Activated B cell treated with CpG ODN at 0.5 μM for 24 hours (primary cell): ENCODE measurements at regions of chr15 and their contacts with region 1.

Region 1: DNA sequence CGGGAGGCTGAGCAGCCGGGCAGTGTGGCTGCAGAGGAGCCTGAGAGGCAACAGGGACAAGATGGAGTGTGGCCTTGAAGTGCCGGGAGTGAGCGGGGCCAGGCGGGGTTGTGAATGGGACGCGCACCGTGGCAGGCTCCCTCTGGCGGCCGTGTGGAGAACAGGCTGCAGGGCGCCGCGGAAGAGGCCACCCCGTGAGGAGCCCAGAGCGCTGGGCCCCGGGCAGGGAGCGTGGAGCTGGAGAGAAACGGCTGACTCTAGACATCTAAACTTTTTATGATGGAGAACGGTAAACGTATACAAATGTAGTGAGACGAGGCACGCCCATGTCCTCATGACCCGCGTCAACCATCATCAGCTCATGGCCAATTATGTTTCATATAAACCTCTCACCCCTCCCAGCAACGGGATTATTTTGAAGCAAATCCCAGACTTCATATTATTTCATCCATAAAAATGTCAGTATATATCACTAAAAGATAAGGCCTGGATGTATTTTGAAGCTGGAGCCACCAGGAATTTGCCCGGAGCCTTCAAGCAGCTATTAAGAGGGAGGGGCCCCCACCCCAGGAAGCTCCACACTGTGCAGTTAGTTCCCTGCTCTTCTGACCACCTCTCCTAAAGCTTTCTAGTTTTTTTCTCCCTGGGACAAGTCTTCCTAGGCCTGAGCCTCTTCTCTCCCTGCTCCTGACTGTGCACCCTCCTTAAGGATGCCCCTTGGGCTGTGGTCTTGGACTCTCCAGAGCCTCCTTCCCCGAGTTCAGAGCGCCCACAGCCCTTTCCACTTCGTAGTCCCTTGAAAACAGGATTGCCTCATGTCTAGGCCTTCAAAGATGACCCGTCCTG is 149.4 kb downstream of the SMAD6 start:
- DNase-seq: peak; percentile 70
- ATAC-seq: peak; percentile 99
- H3K4me3 Mint-ChIP-seq: peak overlapping the region; percentile 38
- H3K27ac Mint-ChIP-seq: no peak overlapping the region
- H3K4me1 Mint-ChIP-seq: peaks cover 13% of the 10 kb centered on the region
- H3K27me3 Mint-ChIP-seq: peaks cover 13% of the 10 kb centered on the region
- CTCF ChIP-seq: peak; percentile 55

Region 2: GRCh38 chr15:66603301-66604179 is 247.9 kb before region 1 on chr15:
- CTCF ChIA-PET with region 1: interaction called, 53 read pairs
- POLR2A ChIA-PET with region 1: no interaction called
- intact Hi-C with region 1: loop called (anchors 1 kb)
- DNase-seq: peak; percentile 56
- ATAC-seq: peak; percentile 65
- H3K4me3 Mint-ChIP-seq: no peak overlapping the region
- H3K27ac Mint-ChIP-seq: no peak overlapping the region
- H3K4me1 Mint-ChIP-seq: no peaks in the 10 kb centered on the region
- H3K27me3 Mint-ChIP-seq: peaks cover 8% of the 10 kb centered on the region
- CTCF ChIP-seq: no peak

Region 3: DNA sequence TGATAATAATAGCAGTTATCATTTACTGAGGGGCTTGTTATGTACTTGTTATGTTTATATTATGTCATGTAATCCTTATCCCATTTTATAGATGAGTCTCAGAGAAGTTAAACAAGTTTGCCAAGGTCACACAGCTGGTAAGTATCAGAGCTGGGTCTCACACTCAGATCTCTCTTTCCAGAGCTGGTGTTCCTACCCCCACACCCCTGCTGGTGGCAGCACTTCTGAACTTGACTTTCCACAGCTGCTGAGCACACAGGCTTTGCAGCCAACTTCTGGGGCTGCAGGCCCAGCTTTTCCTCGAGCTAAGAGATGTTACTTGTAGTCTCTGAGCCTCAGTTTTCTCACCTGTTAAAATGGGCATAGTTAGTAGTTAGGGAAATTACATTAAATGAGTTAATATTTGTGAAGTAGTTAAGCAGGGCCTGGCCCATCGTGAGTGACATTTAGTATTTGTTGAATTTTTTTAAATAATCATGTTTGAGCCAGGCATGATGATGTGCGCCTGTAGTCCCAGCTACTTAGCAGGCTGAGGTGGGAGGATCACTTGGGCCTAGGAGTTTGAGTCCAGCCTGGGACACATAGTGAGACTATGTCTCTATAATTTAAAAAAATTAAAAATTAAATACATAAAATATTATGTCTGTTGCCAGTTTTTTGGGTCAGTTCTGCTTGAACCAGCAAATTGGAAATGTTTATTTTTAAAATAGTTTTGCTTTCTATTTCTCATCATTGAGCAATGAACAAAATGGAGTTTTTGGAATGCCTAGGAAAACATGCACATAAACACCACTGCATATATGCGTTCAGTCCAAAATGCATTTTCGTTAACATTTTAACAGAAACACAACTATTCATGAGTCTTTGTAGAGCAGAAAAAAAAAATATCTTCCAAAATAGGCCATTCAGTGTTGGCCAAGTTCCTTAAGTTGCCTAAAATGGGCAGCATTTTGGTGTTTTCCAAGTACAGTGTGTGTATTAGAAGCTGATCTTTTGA is 62.1 kb before region 1 on chr15:
- CTCF ChIA-PET with region 1: interaction called, 15 read pairs
- POLR2A ChIA-PET with region 1: no interaction called
- intact Hi-C with region 1: loop called (anchors 2 kb)
- DNase-seq: no peak
- ATAC-seq: no peak
- H3K4me3 Mint-ChIP-seq: no peak overlapping the region
- H3K27ac Mint-ChIP-seq: no peak overlapping the region
- H3K4me1 Mint-ChIP-seq: no peaks in the 10 kb centered on the region
- H3K27me3 Mint-ChIP-seq: peaks cover 2% of the 10 kb centered on the region
- CTCF ChIP-seq: no peak

Region 4: DNA sequence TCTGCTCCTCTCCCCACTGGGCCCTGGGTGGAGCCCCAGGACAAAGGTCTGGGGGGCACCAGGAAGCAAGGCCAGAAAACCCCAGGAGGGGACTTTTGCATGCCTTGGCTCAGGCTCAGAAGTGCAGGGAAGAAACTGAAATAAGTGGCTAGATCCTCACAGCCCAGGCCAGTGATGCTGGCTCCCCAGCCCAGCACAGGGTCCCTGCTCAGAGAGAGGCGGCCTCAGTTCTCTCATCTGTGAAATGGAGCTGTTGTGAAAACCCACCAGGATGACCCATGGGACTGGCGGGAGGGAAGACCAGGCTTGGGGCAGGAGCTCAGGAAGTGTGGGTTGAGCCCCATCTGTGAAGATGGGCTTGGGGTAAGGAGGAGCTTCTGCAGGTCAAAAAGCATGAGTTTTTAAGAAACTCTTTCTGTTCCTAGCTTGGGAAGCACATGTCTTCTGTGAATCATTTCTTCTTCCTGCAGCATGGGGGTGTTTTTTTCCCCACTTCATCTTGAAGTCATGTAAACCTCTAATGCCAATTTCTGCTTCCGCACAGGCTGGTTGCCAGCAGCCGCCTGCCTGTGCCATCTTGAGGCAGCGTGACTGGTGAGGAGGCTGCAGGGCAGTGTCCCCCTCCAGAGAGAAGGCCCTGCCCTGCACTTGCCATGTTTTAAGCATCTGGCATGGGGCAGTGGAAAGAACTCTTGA is 30.8 kb before region 1 on chr15:
- CTCF ChIA-PET with region 1: no interaction called
- POLR2A ChIA-PET with region 1: no interaction called
- intact Hi-C with region 1: no loop called
- DNase-seq: no peak
- ATAC-seq: no peak
- H3K4me3 Mint-ChIP-seq: no peak overlapping the region
- H3K27ac Mint-ChIP-seq: no peak overlapping the region
- H3K4me1 Mint-ChIP-seq: no peaks in the 10 kb centered on the region
- H3K27me3 Mint-ChIP-seq: peaks cover 3% of the 10 kb centered on the region
- CTCF ChIP-seq: no peak

Region 5: DNA sequence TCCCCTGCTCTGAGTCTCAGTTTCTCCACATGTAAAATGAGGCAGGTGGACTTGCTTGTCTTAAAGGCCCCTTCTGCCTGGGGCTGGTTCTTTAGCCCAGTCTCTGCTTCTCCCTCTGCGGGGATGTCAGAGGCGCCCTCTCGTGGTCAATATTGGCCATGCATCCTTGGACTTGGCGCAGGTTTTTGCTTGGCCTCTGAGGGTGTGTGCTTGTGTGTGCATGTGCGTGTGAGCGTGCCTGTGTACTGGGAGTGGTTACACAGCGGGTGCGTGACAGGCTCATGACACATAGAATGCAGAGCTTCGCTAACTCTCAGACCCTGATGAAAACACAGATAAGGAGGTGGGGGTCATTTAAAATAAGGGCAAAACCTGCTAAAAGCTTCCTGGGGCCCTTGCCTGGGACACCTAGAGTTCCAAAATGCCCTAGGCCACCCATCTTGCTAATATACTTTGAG is 11.5 kb after region 1 on chr15:
- CTCF ChIA-PET with region 1: interaction called, 11 read pairs
- POLR2A ChIA-PET with region 1: interaction called, 4 read pairs
- intact Hi-C with region 1: loop called (anchors 2 kb)
- DNase-seq: peak; percentile 77
- ATAC-seq: peak; percentile 61
- H3K4me3 Mint-ChIP-seq: no peak overlapping the region
- H3K27ac Mint-ChIP-seq: peak overlapping the region; percentile 55
- H3K4me1 Mint-ChIP-seq: peaks cover 55% of the 10 kb centered on the region
- H3K27me3 Mint-ChIP-seq: no peaks in the 10 kb centered on the region
- CTCF ChIP-seq: peak; percentile 81